ENCODE measurements at regions of chr5 and their contacts with region 1.

Region 1: GRCh38 chr5:147346006-147346561 is 111.3 kb downstream of the STK32A start:
- DNase-seq: no peak

Region 2: DNA sequence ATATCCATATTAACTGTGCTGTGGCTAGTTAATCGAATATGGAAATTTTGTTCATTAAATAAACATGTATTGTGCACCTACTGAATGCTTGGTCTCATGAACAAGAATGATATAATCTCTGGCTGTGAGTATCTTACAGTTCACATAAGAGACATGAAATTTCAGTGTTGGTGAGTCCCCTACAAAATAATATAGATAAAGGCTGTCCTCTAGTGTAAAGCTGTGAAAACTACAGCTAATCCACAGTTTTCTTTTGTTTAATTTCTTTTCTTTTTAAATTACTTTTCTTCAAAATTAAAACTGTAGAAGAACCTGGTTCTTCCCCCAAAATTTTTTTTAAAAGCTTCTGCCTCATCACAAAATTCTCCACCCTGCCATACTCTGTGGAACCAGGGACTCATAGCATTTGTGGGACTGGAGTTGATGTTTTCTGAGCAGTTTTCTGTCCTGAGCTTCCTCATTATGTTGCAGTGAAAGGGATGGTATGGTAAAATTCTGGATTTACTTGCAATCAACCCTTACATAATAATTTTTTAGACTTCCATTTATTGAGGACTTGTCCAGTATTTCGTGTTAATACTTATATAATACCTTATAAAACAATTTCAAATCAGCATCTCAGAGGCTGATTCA is 23.8 kb after region 1 on chr5:
- intact Hi-C with region 1: loop called in 1 of 2 experiments (anchors 1 kb)
- DNase-seq: no peak

Region 3: GRCh38 chr5:148511810-148512347 is 1165.8 kb after region 1 on chr5:
- intact Hi-C with region 1: no loop called
- DNase-seq: no peak

Measured in posterior vena cava (tissue), 2 donors.